Activated CD4-positive, alpha-beta memory T cell treated with anti-CD3 and anti-CD28 coated beads for 36 hours (primary cell): ENCODE measurements at regions of chr3 and their contacts with region 1.

Region 1: GRCh38 chr3:57803647-57804081 is 47.6 kb downstream of the SLMAP start:
- DNase-seq: no peak
- H3K4me3 Mint-ChIP-seq: peak overlapping the region; percentile 10
- H3K27ac Mint-ChIP-seq: peak overlapping the region; percentile 74
- H3K4me1 Mint-ChIP-seq: peaks cover 60% of the 10 kb centered on the region
- H3K27me3 Mint-ChIP-seq: no peaks in the 10 kb centered on the region

Region 2: DNA sequence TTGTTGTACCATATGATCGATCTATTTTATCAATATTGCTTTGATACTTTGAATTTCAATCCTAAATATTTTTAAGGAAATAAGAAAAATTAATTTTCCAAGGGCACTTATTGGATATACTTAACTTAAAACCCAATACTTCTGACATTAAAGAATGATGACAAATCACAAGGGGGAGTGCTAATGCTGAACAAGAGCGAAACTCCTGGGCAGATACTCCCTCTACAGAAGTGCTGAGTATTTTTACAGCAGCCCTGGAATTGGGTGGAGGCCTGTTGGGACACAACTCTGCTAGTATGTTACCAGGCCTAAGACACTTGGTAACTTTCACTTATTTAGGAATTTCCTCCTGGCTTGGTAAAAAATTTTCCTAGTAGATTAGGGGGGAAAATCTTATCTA is 156.9 kb before region 1 on chr3:
- CTCF ChIA-PET with region 1: no interaction called
- POLR2A ChIA-PET with region 1: no interaction called
- intact Hi-C with region 1: no loop called
- DNase-seq: no peak
- H3K4me3 Mint-ChIP-seq: no peak overlapping the region
- H3K27ac Mint-ChIP-seq: no peak overlapping the region
- H3K4me1 Mint-ChIP-seq: peaks cover 10% of the 10 kb centered on the region
- H3K27me3 Mint-ChIP-seq: no peaks in the 10 kb centered on the region

Region 3: DNA sequence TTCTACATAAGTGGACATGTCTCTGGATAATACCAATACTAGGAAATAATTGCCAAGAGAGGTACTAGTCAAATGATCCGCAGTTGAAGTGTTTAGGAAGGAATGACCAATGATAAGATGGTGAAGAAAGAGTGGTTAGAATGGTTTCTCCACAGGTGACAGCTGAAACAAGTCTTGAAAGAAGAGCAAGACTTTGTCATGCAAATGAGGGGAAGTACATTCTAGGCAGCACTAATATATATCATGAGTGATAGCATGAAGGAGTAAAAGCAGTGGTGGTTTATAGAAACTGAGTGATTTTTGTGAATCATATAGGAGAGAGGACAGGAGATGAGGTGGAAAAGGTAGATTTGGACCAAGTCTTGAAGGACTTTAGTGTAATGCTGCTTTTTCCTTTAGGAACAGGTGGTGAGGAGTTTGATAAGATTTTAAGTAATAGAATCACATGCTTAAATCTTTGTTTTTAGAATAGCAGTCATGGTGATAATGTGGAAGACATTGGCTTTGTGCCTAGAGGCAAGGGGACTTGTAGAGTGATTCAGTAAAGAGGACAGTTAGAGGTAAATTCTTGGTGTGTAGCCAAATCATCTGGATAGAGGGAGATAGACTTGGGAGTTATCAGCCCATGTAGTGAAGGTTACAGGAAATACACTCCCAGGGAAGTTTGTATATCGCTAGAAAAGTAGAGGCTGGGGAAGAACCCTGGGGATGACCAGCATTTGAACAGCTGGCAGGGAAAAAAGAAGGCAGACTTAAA is 15.6 kb before region 1 on chr3:
- CTCF ChIA-PET with region 1: no interaction called
- POLR2A ChIA-PET with region 1: no interaction called
- intact Hi-C with region 1: loop called (anchors 1 kb)
- DNase-seq: no peak
- H3K4me3 Mint-ChIP-seq: no peak overlapping the region
- H3K27ac Mint-ChIP-seq: no peak overlapping the region
- H3K4me1 Mint-ChIP-seq: peaks cover 20% of the 10 kb centered on the region
- H3K27me3 Mint-ChIP-seq: no peaks in the 10 kb centered on the region

Region 4: GRCh38 chr3:57820479-57820878 is 16.8 kb after region 1 on chr3:
- CTCF ChIA-PET with region 1: no interaction called
- POLR2A ChIA-PET with region 1: interaction called, 3 read pairs
- intact Hi-C with region 1: loop called (anchors 2 kb)
- DNase-seq: no peak
- H3K4me3 Mint-ChIP-seq: no peak overlapping the region
- H3K27ac Mint-ChIP-seq: no peak overlapping the region
- H3K4me1 Mint-ChIP-seq: peaks cover 25% of the 10 kb centered on the region
- H3K27me3 Mint-ChIP-seq: no peaks in the 10 kb centered on the region

Region 5: GRCh38 chr3:58034738-58035523 is 231.3 kb after region 1 on chr3:
- CTCF ChIA-PET with region 1: no interaction called
- POLR2A ChIA-PET with region 1: no interaction called
- intact Hi-C with region 1: no loop called
- DNase-seq: peak; percentile 64
- H3K4me3 Mint-ChIP-seq: peak overlapping the region; percentile 21
- H3K27ac Mint-ChIP-seq: peak overlapping the region; percentile 71
- H3K4me1 Mint-ChIP-seq: peaks cover 37% of the 10 kb centered on the region
- H3K27me3 Mint-ChIP-seq: no peaks in the 10 kb centered on the region